ENCODE measurements at regions of chr14 and their contacts with region 1.

Region 1: DNA sequence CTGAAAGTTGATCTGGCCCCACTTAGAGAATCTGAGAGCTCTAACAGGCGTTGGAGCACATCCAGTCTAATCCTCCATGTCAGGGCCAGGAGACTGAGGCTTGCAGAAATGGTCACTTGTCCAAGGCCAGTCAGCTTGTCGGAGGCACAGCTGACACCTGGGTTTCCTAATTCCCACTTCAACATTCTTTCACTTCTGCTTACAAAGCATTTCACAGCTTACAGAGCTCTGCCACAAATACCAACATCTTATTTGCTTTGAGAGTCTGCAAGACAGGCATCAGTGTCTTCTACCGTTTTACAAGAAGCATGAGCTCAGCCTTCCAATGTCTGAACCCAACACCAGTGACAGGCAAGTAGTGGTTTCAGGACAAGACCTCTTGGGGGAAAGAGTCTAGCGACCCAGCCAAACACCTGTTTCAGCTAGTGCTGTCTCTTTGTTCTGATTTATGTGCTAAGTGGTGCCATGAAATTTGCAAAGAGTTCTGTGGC is 31.8 kb downstream of the ISCA2 start:
- DNase-seq: no peak
- ATAC-seq: no peak
- H3K4me3 ChIP-seq: no peak overlapping the region
- H3K27ac ChIP-seq: no peak overlapping the region
- H3K4me1 ChIP-seq: no peaks in the 10 kb centered on the region
- CTCF ChIP-seq: no peak
- EP300 ChIP-seq: no peak
- POLR2A ChIP-seq: no peak
- RAD21 ChIP-seq: no peak

Region 2: GRCh38 chr14:74538411-74539391 is 13.3 kb after region 1 on chr14:
- CTCF ChIA-PET with region 1: interaction called, 14 read pairs
- POLR2A ChIA-PET with region 1: no interaction called
- DNase-seq: no peak
- ATAC-seq: no peak
- H3K4me3 ChIP-seq: no peak overlapping the region
- H3K27ac ChIP-seq: no peak overlapping the region
- H3K4me1 ChIP-seq: no peaks in the 10 kb centered on the region
- CTCF ChIP-seq: no peak
- EP300 ChIP-seq: no peak
- POLR2A ChIP-seq: no peak
- RAD21 ChIP-seq: no peak

Region 3: DNA sequence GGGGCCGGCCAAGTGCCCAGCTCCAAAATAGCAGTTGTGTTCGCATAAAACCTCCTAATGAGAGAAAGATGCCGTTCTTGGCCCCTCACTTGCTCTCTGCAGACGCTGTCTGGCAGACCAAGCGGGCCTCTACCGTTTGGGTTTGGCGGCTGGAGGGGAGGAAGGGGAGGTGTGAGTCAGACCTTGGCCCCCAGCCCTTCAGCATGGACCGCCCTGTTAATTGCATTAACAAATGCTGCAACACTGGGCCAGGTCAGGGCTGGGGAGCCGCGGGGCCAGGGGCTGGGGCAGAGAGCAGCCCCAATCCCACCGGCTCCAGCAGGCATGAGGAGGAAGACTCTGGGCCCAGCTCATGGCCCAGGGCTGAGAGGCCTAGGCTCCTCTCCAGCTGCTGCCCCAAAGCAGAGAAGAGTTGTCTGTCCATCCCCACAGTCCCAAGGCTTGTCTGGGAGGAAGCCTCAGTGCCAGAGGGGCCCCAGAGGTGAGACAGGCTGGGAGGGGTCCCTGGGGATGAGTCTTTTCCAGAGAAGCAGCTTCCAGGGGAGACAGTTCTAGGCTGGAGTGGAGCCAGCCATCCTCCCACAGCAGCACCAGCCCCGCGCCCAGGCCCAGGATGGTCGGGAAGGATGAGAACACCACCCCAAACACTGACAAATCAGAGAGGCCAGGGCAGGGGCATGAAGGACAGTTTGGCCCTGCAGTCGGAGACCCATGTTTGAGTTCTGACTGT is 69.8 kb after region 1 on chr14:
- CTCF ChIA-PET with region 1: no interaction called
- POLR2A ChIA-PET with region 1: no interaction called
- DNase-seq: no peak
- ATAC-seq: no peak; a peak in 1 of 6 replicates
- H3K4me3 ChIP-seq: no peak overlapping the region
- H3K27ac ChIP-seq: peak overlapping the region in 1 of 2 experiments; percentile 36; a peak in 2 of 6 replicates
- H3K4me1 ChIP-seq: no peaks in the 10 kb centered on the region
- CTCF ChIP-seq: no peak
- EP300 ChIP-seq: no peak
- POLR2A ChIP-seq: no peak
- RAD21 ChIP-seq: no peak

Measured in A549 (cell line).